Panc1 (cell line): ENCODE measurements at regions of chr3 and their contacts with region 1.

Region 1: DNA sequence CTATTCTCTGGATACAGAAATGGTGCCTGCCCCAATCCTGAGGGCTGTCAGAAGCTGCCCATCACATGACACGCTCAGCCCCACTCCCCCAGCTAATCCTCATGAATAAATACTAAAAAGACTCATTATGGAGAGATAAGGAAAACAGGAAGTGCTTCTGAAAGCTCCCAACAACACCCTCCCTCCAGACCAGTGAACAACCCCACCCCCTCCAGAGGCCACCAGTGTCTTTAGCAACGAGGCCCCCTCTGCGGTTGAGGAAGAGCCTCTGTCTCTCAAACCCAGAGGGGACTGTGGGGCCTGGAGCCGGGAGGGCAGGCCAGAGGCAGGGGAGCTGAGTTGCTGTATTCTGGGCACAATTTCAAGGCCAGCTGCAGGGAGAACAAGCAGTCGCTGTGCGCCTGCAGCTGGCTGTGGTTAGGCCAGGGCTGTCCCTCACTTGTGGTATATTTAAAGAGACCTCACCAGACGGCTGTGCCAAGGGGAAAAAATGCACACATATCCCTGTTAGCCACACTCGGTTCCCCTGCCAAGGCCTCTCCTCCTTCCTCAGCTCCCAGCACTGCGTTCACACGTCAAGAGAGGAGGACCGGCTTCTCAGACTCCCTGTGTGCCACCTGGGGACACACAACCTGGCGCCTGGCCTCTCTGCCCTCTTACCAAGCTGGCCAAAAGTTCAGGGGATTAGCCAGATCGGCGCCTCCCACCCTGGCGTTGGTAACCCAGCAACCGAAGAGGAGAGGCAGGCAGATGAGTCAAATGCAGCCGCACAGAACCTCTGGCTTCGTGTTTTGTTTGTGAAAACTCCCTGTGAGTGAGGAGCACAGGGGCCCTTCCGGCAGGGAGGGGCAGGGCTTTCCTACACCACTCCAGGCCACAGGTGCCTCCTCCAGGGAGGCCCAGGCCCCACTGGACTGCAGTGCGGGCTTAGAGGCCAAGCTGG is 101.2 kb upstream of the ETV5 start:
- DNase-seq: no peak
- ATAC-seq: peak; percentile 48; the same call in 1 of the 2 replicates
- H3K4me3 ChIP-seq: no peak overlapping the region
- H3K27ac ChIP-seq: no peak overlapping the region
- H3K4me1 ChIP-seq: no peaks in the 10 kb centered on the region
- H3K27me3 ChIP-seq: peaks cover 3% of the 10 kb centered on the region; the same call in 1 of the 2 replicates
- CTCF ChIP-seq: no peak

Region 2: GRCh38 chr3:186169379-186169778 is 40.7 kb before region 1 on chr3:
- CTCF ChIA-PET with region 1: interaction called, 12 read pairs
- POLR2A ChIA-PET with region 1: no interaction called
- in situ Hi-C with region 1: no loop called
- intact Hi-C with region 1: no loop called
- DNase-seq: no peak
- ATAC-seq: no peak
- H3K4me3 ChIP-seq: no peak overlapping the region
- H3K27ac ChIP-seq: no peak overlapping the region
- H3K4me1 ChIP-seq: no peaks in the 10 kb centered on the region
- H3K27me3 ChIP-seq: peaks cover 16% of the 10 kb centered on the region
- CTCF ChIP-seq: no peak

Region 3: DNA sequence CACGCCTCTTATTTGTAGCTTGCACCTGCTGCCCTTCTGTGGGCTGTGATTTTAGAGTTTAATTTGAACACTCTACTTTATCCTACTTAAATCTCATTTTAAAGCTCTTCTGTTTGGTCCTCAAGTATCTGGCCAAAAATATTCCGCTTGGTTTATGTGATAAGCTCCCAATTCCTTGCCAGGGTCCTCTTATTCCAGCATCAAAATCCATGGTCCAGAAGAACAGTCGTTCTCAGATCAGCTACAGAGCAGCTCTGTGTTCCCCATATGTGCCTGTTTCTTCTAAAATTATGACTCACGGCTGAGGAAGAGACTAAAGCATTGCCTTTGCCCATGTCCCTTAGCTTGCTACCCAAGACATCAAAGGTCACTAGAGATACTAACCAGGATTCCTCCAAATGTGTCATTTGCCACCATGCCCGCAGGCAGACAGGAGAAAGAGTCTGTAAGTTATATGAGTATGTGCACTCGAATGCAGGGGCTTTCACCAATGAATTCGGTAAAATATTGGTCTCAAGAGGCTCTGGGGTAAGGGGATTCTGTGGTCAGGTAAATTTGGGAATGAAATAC is 14.0 kb after region 1 on chr3:
- CTCF ChIA-PET with region 1: no interaction called
- POLR2A ChIA-PET with region 1: interaction called, 15 read pairs
- in situ Hi-C with region 1: no loop called
- intact Hi-C with region 1: no loop called
- DNase-seq: no peak
- ATAC-seq: no peak
- H3K4me3 ChIP-seq: no peak overlapping the region
- H3K27ac ChIP-seq: no peak overlapping the region
- H3K4me1 ChIP-seq: no peaks in the 10 kb centered on the region
- H3K27me3 ChIP-seq: peaks cover 22% of the 10 kb centered on the region
- CTCF ChIP-seq: no peak

Region 4: GRCh38 chr3:186953011-186953487 is 743.0 kb after region 1 on chr3:
- CTCF ChIA-PET with region 1: no interaction called
- POLR2A ChIA-PET with region 1: no interaction called
- in situ Hi-C with region 1: no loop called
- intact Hi-C with region 1: no loop called
- DNase-seq: no peak
- ATAC-seq: no peak
- H3K4me3 ChIP-seq: no peak overlapping the region
- H3K27ac ChIP-seq: no peak overlapping the region
- H3K4me1 ChIP-seq: no peaks in the 10 kb centered on the region
- H3K27me3 ChIP-seq: no peaks in the 10 kb centered on the region
- CTCF ChIP-seq: no peak